ENCODE measurements at regions of chr3 and their contacts with region 1.

Region 1: GRCh38 chr3:80000039-80000438 is 232.2 kb upstream of the ROBO1 start:
- DNase-seq: peak; percentile 91
- ATAC-seq: peak; percentile 78
- H3K4me3 ChIP-seq: peak overlapping the region; percentile 20; the same call in 1 of the 2 replicates
- H3K27ac ChIP-seq: peak overlapping the region; percentile 82
- H3K4me1 ChIP-seq: peaks cover 39% of the 10 kb centered on the region
- H3K27me3 ChIP-seq: no peaks in the 10 kb centered on the region
- CTCF ChIP-seq: no peak

Region 2: GRCh38 chr3:79773291-79773690 is 226.7 kb before region 1 on chr3:
- CTCF ChIA-PET with region 1: no interaction called
- POLR2A ChIA-PET with region 1: no interaction called
- intact Hi-C with region 1: loop called (anchors 5 kb)
- DNase-seq: no peak
- ATAC-seq: no peak
- H3K4me3 ChIP-seq: no peak overlapping the region
- H3K27ac ChIP-seq: no peak overlapping the region
- H3K4me1 ChIP-seq: no peaks in the 10 kb centered on the region
- H3K27me3 ChIP-seq: 0 out of 2 replicates have a peak, but pooled peaks cover 3% of the 10 kb centered on the region
- CTCF ChIP-seq: no peak

Region 3: GRCh38 chr3:79872504-79873159 is 127.4 kb before region 1 on chr3:
- CTCF ChIA-PET with region 1: no interaction called
- POLR2A ChIA-PET with region 1: no interaction called
- intact Hi-C with region 1: loop called (anchors 5 kb)
- DNase-seq: peak; percentile 94
- ATAC-seq: peak; percentile 97
- H3K4me3 ChIP-seq: no peak overlapping the region
- H3K27ac ChIP-seq: peak overlapping the region; percentile 68
- H3K4me1 ChIP-seq: peaks cover 26% of the 10 kb centered on the region
- H3K27me3 ChIP-seq: no peaks in the 10 kb centered on the region
- CTCF ChIP-seq: no peak

Region 4: GRCh38 chr3:79986338-79986737 is 13.7 kb before region 1 on chr3:
- CTCF ChIA-PET with region 1: no interaction called
- POLR2A ChIA-PET with region 1: no interaction called
- intact Hi-C with region 1: loop called (anchors 1 kb)
- DNase-seq: no peak
- ATAC-seq: peak; percentile 65; the same call in 1 of the 2 replicates
- H3K4me3 ChIP-seq: no peak overlapping the region
- H3K27ac ChIP-seq: peak overlapping the region; percentile 93
- H3K4me1 ChIP-seq: peaks cover 23% of the 10 kb centered on the region
- H3K27me3 ChIP-seq: no peaks in the 10 kb centered on the region
- CTCF ChIP-seq: no peak

Region 5: DNA sequence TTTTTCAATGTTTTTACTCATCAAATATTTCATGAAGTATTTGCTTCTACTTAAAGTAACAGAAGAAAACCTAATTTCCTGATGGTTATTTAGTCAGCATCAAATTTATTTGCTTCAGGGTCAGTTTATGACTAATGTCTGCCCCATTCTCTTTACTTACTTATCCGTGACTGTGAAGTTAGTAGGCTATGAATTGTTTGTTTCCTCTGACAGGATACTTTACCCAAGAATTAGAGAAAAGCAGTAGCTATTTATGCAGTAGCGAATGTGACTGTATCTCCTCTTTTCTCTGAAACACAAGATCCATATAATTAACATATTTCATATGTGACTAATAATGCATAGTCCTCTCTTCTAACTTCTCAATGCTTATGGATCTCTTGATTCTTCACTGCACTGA is 97.6 kb after region 1 on chr3:
- CTCF ChIA-PET with region 1: no interaction called
- POLR2A ChIA-PET with region 1: no interaction called
- intact Hi-C with region 1: no loop called
- DNase-seq: peak; percentile 84
- ATAC-seq: peak; percentile 99
- H3K4me3 ChIP-seq: no peak overlapping the region
- H3K27ac ChIP-seq: peak overlapping the region; percentile 24
- H3K4me1 ChIP-seq: peaks cover 31% of the 10 kb centered on the region
- H3K27me3 ChIP-seq: no peaks in the 10 kb centered on the region
- CTCF ChIP-seq: no peak

Region 6: DNA sequence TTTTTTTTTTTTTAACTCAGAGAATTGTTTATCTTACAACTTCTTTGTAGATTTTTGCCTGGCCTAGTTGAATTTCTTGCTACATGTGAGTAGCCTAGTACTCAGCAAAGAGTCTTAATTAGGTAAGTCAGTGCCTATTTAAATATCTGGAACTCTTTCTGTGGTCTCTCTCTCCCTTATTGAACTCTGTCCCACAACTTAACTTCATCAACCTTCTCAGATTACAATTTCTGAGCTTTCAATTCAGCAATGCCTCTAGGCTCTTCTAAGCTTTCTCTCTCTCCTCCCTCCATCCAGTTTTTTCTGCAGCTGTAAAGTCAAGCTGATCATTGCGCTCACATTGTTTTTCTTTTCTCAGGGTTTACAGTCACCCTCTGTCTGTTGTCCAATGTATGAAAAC is 285.3 kb after region 1 on chr3:
- CTCF ChIA-PET with region 1: no interaction called
- POLR2A ChIA-PET with region 1: no interaction called
- intact Hi-C with region 1: loop called (anchors 5 kb)
- DNase-seq: peak; percentile 57
- ATAC-seq: peak; percentile 51
- H3K4me3 ChIP-seq: no peak overlapping the region
- H3K27ac ChIP-seq: no peak overlapping the region
- H3K4me1 ChIP-seq: peaks cover 31% of the 10 kb centered on the region
- H3K27me3 ChIP-seq: no peaks in the 10 kb centered on the region
- CTCF ChIP-seq: no peak

Region 7: DNA sequence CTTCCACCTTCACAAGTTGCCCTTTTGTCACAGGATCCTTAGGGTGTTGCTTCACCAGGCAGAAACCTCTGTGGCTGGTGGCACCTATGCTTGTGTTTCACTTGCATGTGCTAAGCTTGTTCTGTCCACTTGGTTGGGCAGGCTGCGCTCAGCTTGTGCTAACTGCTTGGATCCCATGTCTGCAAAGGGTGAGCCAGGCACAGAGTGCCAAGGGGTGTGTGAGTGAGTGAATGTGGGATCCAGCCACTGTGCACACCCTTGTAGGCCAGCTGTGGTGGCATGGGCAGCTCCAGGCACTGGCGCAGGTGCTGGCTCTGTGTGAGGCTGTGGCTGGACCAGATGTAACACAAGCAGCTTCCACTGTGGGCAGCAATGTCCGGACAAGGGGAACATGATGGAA is 496.4 kb after region 1 on chr3:
- CTCF ChIA-PET with region 1: no interaction called
- POLR2A ChIA-PET with region 1: no interaction called
- intact Hi-C with region 1: no loop called
- DNase-seq: no peak
- ATAC-seq: no peak
- H3K4me3 ChIP-seq: no peak overlapping the region
- H3K27ac ChIP-seq: no peak overlapping the region
- H3K4me1 ChIP-seq: no peaks in the 10 kb centered on the region
- H3K27me3 ChIP-seq: no peaks in the 10 kb centered on the region
- CTCF ChIP-seq: no peak

Region 8: DNA sequence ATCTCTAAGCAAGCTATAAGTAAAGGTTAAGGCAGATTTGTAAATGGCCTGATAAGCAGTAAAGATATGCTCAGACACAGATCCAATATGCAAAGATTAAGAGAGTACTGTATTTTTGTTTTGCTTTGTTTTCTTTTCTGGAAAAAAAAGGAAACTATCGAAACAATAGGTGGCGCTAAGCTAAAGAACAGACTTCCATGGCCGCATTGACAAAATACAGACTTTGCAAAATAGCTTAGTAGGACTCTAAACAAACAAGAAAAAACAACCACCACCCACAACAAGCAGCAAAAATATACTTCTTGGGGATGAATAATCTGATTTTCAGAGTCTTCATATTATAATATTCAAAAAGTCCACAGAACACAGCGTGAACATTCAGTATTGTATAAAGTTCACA is 526.1 kb after region 1 on chr3:
- CTCF ChIA-PET with region 1: no interaction called
- POLR2A ChIA-PET with region 1: no interaction called
- intact Hi-C with region 1: loop called (anchors 10 kb)
- DNase-seq: peak; percentile 39
- ATAC-seq: no peak; the same call in 1 of the 2 replicates
- H3K4me3 ChIP-seq: no peak overlapping the region
- H3K27ac ChIP-seq: no peak overlapping the region
- H3K4me1 ChIP-seq: peaks cover 6% of the 10 kb centered on the region; the same call in 1 of the 2 replicates
- H3K27me3 ChIP-seq: no peaks in the 10 kb centered on the region
- CTCF ChIP-seq: peak; percentile 86

Measured in PC-3 (cell line).